Activated naive CD4-positive, alpha-beta T cell treated with anti-CD3 and anti-CD28 coated beads for 36 hours (primary cell): ENCODE measurements at regions of chr3 and their contacts with region 1.

Region 1: GRCh38 chr3:157136647-157137387 is 23.1 kb downstream of the CCNL1 start:
- DNase-seq: no peak
- H3K4me3 Mint-ChIP-seq: no peak overlapping the region
- H3K27ac Mint-ChIP-seq: no peak overlapping the region
- H3K4me1 Mint-ChIP-seq: peaks cover 11% of the 10 kb centered on the region
- H3K27me3 Mint-ChIP-seq: no peaks in the 10 kb centered on the region

Region 2: GRCh38 chr3:156040041-156040440 is 1096.8 kb before region 1 on chr3:
- CTCF ChIA-PET with region 1: no interaction called
- intact Hi-C with region 1: loop called (anchors 5 kb)
- DNase-seq: no peak
- H3K4me3 Mint-ChIP-seq: no peak overlapping the region
- H3K27ac Mint-ChIP-seq: no peak overlapping the region
- H3K4me1 Mint-ChIP-seq: no peaks in the 10 kb centered on the region
- H3K27me3 Mint-ChIP-seq: peaks cover 6% of the 10 kb centered on the region

Region 3: GRCh38 chr3:156472150-156472549 is 664.7 kb before region 1 on chr3:
- CTCF ChIA-PET with region 1: no interaction called
- intact Hi-C with region 1: loop called (anchors 1 kb)
- DNase-seq: no peak
- H3K4me3 Mint-ChIP-seq: no peak overlapping the region
- H3K27ac Mint-ChIP-seq: no peak overlapping the region
- H3K4me1 Mint-ChIP-seq: peaks cover 1% of the 10 kb centered on the region
- H3K27me3 Mint-ChIP-seq: peaks cover 7% of the 10 kb centered on the region

Region 4: DNA sequence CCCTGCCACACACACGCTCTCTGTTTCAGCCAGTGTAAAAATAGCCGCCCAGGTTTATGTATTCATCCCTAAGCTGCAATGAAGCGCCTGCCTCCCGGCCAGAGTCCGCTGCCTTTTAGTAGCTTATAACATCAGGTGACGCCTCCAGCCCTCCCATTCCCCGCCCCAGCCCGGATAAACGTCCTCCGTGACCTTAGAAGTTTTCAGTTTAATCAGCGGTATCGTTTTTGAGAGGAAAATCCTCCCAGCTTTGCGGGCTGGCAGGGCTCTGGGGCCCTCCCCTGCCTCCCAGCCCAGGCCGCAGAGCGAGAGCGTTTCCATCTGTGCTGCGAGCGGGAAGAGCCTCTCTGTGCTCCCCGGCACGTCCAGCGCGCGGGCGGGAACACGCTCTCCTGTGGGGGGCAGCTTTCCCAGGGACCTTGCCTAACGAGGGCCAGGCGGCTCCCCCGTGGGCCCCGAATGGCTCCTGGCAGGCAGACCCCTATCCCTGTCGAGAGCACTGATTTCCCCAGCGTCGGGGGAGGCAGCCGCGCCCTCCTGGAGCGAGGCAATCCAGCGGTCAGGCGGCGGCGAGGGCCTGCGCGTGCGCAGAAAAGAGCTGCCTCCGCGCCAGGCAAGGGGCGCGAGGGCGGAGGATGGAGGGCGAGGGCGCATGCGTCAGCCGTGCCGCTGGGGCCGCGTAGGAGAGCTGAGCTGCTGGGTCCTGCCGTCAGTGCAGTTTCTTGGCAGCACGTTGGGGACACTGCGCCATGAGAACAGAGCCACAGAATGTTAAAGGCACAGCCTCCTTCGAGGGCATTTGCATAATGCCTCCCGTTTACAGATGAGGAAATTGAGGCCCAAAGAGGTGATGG is 48.0 kb before region 1 on chr3:
- CTCF ChIA-PET with region 1: interaction called, 54 read pairs
- intact Hi-C with region 1: no loop called
- DNase-seq: peak; percentile 94
- H3K4me3 Mint-ChIP-seq: peak overlapping the region; percentile 73
- H3K27ac Mint-ChIP-seq: peak overlapping the region; percentile 96
- H3K4me1 Mint-ChIP-seq: peaks cover 51% of the 10 kb centered on the region
- H3K27me3 Mint-ChIP-seq: peaks cover 4% of the 10 kb centered on the region

Region 5: GRCh38 chr3:157113832-157114505 is 22.8 kb before region 1 on chr3:
- CTCF ChIA-PET with region 1: interaction called, 13 read pairs
- intact Hi-C with region 1: no loop called
- DNase-seq: no peak
- H3K4me3 Mint-ChIP-seq: no peak overlapping the region
- H3K27ac Mint-ChIP-seq: no peak overlapping the region
- H3K4me1 Mint-ChIP-seq: no peaks in the 10 kb centered on the region
- H3K27me3 Mint-ChIP-seq: no peaks in the 10 kb centered on the region

Region 6: DNA sequence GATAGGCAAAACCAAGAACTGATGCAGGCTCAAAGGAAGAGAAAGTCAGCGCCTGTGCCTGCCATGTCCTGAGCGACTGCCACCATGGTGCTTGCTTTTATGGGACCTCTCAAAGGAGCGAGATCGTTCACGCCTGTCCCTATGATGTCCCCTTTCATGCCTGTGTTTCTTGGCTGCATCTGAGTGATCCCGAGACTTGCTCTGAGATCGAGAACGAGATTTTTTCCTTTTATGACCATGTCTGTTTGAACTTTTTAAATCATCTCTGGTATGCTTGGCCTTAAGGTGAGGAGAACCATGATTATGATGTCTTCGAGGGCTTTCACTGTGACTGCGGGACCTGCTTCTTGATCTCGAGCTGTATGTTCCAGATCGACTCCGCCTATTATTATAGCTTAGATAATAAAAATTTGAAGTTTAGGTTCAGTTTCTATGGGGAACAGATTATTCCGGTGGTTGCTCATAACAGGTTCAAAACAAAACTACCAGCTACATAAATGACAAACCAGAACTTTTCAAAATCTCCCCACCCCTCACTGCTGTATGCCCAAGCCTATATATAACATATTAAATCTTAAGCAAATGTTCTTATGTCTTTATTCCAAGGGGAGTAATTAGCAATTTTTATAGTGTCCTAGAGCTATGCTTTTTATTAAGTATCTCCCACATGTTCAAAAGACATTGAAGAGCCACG is 11.5 kb after region 1 on chr3:
- CTCF ChIA-PET with region 1: interaction called, 28 read pairs
- intact Hi-C with region 1: no loop called
- DNase-seq: no peak
- H3K4me3 Mint-ChIP-seq: no peak overlapping the region
- H3K27ac Mint-ChIP-seq: no peak overlapping the region
- H3K4me1 Mint-ChIP-seq: peaks cover 50% of the 10 kb centered on the region
- H3K27me3 Mint-ChIP-seq: no peaks in the 10 kb centered on the region

Region 7: DNA sequence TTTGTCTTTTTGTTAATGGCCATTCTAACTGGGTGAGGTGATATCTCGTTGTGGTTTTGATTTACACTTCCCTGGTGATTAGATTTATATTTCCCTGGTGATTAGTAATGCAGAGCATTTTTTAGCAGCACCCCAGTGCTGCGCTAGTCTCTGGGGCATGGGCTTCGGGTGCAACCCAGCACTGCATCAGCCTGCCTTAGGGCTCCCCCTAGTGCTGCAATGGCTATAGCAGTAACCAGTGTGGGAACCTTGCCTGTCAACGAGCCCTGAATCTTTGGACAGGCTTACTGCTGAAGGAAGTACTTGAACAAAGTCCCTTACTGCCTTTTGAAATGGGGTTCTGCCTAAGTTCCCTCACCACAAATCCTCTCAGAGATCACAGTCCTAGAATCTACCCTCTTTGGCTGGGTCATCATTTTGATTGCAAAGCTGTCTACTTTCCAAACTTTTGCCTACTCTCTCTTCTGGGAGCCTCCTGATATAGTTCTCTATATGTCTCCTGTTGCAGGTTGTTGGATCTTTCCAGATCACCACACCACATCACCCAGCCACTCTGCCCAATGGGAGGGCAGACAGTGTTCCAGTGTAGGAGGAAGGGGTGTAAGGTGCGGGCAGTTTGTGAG is 102.4 kb after region 1 on chr3:
- CTCF ChIA-PET with region 1: interaction called, 8 read pairs
- intact Hi-C with region 1: loop called (anchors 1 kb)
- DNase-seq: peak; percentile 88
- H3K4me3 Mint-ChIP-seq: no peak overlapping the region
- H3K27ac Mint-ChIP-seq: no peak overlapping the region
- H3K4me1 Mint-ChIP-seq: peaks cover 2% of the 10 kb centered on the region
- H3K27me3 Mint-ChIP-seq: no peaks in the 10 kb centered on the region